Right ventricle myocardium inferior (tissue), 1 donor: ENCODE measurements at regions of chr16 and their contacts with region 1.

Region 1: DNA sequence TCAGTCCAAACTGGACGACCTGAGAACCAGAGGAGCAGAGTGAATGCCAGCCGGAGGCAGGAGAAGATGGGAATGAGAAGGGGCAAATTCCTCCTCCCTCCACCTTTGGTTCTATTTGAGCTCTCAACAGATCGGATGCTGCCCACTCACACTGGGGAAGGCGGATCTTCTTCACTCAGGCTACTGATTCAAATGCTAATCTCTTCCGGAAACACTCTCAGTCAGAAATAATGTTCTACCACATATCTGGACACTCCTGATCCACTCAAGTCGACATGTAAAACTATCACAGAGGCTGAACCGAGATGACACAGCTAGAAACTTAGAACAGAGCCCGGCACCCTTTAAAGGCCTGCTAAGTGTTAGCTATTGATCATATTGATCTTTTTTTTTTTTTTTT is 57.4 kb upstream of the GRIN2A start:
- DNase-seq: no peak
- ATAC-seq: no peak

Region 2: GRCh38 chr16:9922402-9922801 is 317.2 kb before region 1 on chr16:
- intact Hi-C with region 1: loop called (anchors 5 kb)
- DNase-seq: no peak
- ATAC-seq: no peak

Region 3: DNA sequence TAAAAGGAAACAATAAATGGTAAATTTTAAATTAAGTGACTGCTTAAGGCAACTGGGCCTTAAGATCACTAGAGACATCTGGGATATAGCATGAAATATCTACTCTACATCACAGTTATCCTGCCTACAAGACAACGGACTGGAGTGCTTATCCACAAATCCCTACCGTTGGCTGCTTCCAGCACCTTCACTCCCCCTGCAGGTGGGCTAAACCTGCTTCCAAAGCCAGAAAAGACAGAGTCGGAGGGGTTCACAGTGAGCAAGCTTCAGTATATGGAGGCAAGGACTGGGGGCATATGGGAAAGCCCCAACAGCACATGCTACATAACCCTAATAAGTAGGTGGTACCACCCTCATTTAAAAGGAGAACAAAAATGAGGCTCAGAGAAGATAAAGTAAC is 102.7 kb before region 1 on chr16:
- intact Hi-C with region 1: no loop called
- DNase-seq: no peak
- ATAC-seq: no peak

Region 4: GRCh38 chr16:10949370-10949970 is 709.8 kb after region 1 on chr16:
- intact Hi-C with region 1: no loop called
- DNase-seq: no peak
- ATAC-seq: no peak